ENCODE measurements at regions of chr1 and their contacts with region 1.

Region 1: GRCh38 chr1:201625226-201625761 is 86.4 kb downstream of the NAV1 start:
- DNase-seq: no peak
- H3K4me3 ChIP-seq: no peak overlapping the region
- H3K27ac ChIP-seq: no peak overlapping the region
- H3K4me1 ChIP-seq: no peaks in the 10 kb centered on the region
- H3K27me3 ChIP-seq: no peaks in the 10 kb centered on the region
- CTCF ChIP-seq: no peak

Region 2: GRCh38 chr1:201660931-201661822 is 35.9 kb after region 1 on chr1:
- CTCF ChIA-PET with region 1: no interaction called
- dilution Hi-C with region 1: no loop called
- in situ Hi-C with region 1: no loop called
- intact Hi-C with region 1: loop called (anchors 5 kb)
- DNase-seq: no peak
- H3K4me3 ChIP-seq: no peak overlapping the region
- H3K27ac ChIP-seq: no peak overlapping the region
- H3K4me1 ChIP-seq: no peaks in the 10 kb centered on the region
- H3K27me3 ChIP-seq: no peaks in the 10 kb centered on the region
- CTCF ChIP-seq: no peak

Measured in mammary epithelial cell (primary cell).